Body of pancreas (tissue), 4 donors: ENCODE measurements at regions of chr9 and their contacts with region 1.

Region 1: DNA sequence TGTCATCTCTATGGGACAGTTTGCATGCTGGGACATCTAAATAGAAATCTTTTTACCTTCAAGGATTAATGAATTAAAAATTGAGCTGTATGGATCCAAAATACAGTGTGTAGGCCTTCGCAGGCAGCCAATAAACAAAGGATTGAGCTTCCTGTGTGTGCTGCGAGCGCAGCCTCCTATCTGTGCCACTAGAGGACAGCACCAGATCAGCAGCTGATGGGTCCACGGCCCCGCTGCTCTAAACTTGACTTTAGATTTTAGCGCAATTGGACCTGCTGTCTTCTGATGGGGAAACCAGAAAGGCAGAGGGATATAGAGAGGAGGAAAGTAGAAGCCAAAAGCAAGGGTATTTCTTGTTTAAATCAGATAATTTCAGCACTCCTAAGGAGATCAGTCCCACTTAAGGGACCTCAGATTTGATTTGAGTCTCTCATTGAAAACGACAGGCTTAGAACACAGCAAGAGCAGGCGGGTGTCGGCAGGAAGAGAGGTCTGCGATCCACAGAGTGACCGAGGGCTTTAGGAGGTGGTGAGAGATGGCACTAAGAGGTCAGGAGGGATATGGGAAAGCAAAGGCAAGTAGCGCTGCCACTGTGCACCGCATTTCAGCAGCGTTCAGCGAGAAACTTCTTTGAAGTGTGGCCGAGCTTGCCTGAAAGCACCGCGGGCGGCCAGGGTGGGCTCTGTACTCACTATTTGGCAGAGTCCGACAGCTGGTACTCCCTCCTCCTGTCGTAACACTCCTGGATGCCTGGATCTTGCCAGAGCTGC is 214.3 kb downstream of the GNA14 start:
- DNase-seq: peak; percentile 63 to 81 (median 77)
- ATAC-seq: peak; percentile 88
- H3K4me3 ChIP-seq: no peak overlapping the region
- H3K27ac ChIP-seq: no peak overlapping the region
- H3K4me1 ChIP-seq: peaks cover 4% of the 10 kb centered on the region
- H3K27me3 ChIP-seq: no peaks in the 10 kb centered on the region
- CTCF ChIP-seq: peak; percentile 91 to 97 (median 93)
- POLR2A ChIP-seq: no peak

Region 2: DNA sequence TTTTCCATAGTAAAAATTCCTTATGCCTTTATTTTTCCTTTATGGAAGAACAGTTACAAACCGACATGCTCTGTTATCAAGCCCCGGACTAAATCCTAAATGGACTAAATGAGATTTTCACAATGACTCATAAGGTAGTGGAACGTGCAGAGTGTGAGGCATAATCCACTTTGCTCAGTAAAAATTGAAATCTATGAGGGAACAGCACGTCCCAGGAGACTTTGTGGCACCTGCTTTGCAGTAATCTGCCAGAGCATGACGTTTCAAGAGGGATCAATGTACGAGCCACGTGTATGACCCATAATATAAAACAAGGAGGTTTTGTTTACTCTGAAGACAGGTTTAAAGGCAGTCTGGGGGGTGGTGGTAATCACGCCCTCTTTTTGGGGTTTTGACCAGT is 298.1 kb after region 1 on chr9:
- intact Hi-C with region 1: loop called (anchors 10 kb)
- DNase-seq: peak in 1 of 4 donors; percentile 13
- ATAC-seq: peak; percentile 38
- H3K4me3 ChIP-seq: no peak overlapping the region
- H3K27ac ChIP-seq: no peak overlapping the region
- H3K4me1 ChIP-seq: peaks cover 4% of the 10 kb centered on the region
- H3K27me3 ChIP-seq: no peaks in the 10 kb centered on the region
- CTCF ChIP-seq: no peak
- POLR2A ChIP-seq: no peak